PC-3 (cell line): ENCODE measurements at regions of chr15 and their contacts with region 1.

Region 1: DNA sequence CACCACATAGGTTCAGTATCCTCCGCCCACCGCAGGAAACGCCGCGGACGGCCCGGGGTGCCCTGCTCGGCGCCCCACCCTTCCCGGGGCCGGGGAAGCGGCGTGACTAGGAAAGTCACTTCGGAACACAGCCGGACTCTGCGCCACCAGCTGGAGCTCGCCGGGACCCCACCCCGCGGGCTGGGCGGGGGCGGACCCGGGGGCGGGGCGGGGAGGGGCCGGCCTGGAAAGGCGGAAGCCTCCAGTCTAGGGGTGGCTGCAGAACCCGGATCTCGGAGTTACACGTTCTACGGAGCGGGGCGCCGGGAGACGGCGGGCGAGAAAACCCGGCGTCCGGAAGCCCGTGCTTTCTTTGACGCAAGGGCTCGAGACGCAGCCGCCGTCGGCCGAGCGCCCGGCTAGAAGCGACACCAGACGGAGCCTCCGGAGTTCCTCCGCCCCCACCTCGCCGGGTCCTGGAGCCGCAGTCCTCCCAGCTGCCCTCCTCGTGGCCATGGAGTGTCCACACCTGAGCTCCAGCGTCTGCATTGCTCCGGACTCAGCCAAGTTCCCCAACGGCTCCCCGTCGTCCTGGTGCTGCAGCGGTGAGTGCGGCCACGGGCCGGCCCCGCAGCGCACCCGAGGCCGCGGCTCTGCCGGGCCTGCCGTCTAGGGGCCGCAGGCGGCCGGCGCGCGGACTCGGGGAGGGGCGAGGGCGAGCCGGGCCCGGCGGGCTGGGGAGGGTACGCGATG is at the start of gene USP3:
- DNase-seq: peak; percentile 91
- ATAC-seq: peak; percentile 53
- H3K4me3 ChIP-seq: peak within 1 kb of the TSS; percentile 85
- H3K27ac ChIP-seq: peak within 1 kb of the TSS; percentile 100
- H3K4me1 ChIP-seq: peaks cover 79% of the 10 kb centered on the region
- H3K27me3 ChIP-seq: no peaks in the 10 kb centered on the region
- CTCF ChIP-seq: no peak
- total RNA-seq, gene USP3: 26.9 and 27.3 TPM in 2 replicates

Region 2: DNA sequence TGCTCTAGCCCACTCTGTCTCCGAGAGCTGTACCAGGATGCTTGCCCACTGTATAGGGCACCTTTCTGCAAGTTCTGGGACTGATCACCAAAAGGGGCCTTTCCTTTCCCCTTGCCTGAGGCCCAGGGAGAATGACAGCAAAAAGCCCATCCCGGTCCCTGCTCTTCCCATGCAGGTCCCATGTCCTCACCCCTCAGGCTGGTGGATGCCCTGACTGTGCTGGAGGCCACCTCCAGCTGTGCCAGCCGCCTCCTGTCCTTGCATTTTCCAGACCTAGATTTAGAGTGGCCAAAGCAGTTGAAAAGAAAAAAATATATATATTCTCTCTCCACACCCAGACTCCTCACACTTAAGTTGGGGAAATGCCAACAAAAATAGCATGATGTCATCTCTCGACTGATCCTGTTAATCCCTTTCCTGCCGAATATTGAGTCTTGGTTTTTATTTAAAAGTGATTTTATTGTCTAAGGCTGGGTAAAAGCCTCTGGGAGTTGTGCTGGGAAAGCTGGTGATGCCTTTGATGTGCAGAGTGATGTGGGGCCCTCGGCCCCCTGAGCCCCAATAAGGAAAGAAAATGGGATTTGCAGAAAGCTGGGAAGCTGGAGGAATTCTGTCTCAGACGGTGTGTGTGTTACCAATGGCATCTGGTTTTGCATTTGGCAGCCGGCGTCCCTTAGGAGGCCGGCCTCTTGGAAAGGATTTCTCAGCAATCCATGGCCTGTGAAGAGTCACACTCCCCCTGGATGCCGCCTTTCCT is 491.2 kb before region 1 on chr15:
- CTCF ChIA-PET with region 1: no interaction called
- POLR2A ChIA-PET with region 1: interaction called, 13 read pairs
- intact Hi-C with region 1: no loop called
- DNase-seq: peak; percentile 42
- ATAC-seq: no peak
- H3K4me3 ChIP-seq: no peak overlapping the region
- H3K27ac ChIP-seq: no peak overlapping the region
- H3K4me1 ChIP-seq: peaks cover 12% of the 10 kb centered on the region
- H3K27me3 ChIP-seq: no peaks in the 10 kb centered on the region
- CTCF ChIP-seq: no peak

Region 3: GRCh38 chr15:63107895-63108546 is 396.4 kb before region 1 on chr15:
- CTCF ChIA-PET with region 1: no interaction called
- POLR2A ChIA-PET with region 1: no interaction called
- intact Hi-C with region 1: no loop called
- DNase-seq: peak; percentile 38
- ATAC-seq: no peak
- H3K4me3 ChIP-seq: no peak overlapping the region
- H3K27ac ChIP-seq: no peak overlapping the region
- H3K4me1 ChIP-seq: no peaks in the 10 kb centered on the region
- H3K27me3 ChIP-seq: no peaks in the 10 kb centered on the region
- CTCF ChIP-seq: no peak

Region 4: GRCh38 chr15:63188926-63189871 is 315.2 kb before region 1 on chr15 and contains the start of gene RAB8B:
- CTCF ChIA-PET with region 1: no interaction called
- POLR2A ChIA-PET with region 1: no interaction called
- intact Hi-C with region 1: no loop called
- DNase-seq: peak; percentile 91
- ATAC-seq: peak; percentile 97
- H3K4me3 ChIP-seq: peak within 1 kb of the TSS; percentile 89
- H3K27ac ChIP-seq: no peak within 1 kb of the TSS
- H3K4me1 ChIP-seq: peaks cover 36% of the 10 kb centered on the region
- H3K27me3 ChIP-seq: no peaks in the 10 kb centered on the region
- CTCF ChIP-seq: no peak
- total RNA-seq, gene RAB8B: 6.2 and 8.5 TPM in 2 replicates

Region 5: DNA sequence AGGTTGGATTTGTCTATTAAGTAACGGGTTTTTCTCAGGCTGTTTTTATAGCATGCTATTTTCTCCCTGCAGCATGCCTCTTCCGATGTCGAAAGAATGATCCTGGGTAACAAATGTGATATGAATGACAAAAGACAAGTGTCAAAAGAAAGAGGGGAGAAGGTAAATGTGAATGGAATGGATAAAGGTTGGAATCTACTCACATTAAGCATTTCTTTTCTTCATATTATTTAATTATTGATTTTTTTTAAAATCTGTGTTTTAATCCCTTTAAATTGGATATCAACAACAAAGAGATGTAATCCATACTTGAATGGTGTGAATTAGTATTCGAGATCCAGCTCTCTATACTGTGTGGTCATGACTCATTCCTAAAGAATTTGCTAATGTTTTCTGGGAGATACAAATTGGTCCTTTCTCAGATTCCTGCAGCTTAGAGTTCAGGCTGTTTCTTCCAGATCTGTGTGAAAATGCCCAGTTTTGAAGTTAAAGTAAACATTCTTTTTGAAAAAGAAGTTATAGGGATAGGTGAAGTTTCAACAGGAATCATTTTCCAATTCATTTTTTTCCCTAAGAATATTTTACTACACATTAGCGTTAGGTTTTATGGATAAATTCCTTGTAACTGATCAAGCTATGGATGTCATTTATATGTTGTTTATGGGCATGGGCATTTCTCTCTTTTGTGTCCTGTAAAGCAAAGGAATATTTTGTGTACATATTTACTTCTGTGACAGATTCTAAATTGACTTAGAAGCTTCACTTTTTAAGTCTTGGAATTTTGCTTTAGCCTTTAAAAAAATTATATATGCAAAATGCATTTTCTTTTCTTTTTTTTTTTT is 247.8 kb before region 1 on chr15:
- CTCF ChIA-PET with region 1: no interaction called
- POLR2A ChIA-PET with region 1: no interaction called
- intact Hi-C with region 1: no loop called
- DNase-seq: peak; percentile 65
- ATAC-seq: peak; percentile 81
- H3K4me3 ChIP-seq: no peak overlapping the region
- H3K27ac ChIP-seq: no peak overlapping the region
- H3K4me1 ChIP-seq: peaks cover 15% of the 10 kb centered on the region
- H3K27me3 ChIP-seq: no peaks in the 10 kb centered on the region
- CTCF ChIP-seq: no peak

Region 6: DNA sequence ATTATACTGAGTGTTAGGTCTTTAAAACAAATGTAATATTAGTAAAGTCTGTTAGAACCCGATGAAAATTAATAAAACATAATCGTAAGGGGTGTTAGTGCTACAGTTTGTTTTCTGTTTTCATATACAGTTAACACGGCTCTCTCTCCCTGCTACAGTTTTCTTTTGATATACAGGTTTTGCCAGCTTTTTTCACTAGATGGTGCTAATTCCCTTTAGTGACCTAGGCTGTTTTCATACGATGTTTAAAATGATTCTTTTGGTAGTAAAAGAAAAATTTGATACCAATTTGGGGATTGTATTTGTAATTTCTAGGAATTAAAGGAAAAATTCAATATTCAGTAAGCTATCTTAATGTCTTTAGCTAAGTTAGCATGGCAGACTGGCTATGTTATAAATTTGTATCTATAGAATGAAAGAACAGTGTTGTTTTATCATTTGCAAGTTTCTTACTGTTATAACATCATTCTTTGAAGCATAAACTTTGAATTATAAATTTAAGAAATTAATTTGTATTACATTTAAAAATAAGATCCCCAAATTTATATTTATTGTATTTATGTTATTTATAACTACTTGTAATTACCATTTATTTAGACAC is 215.5 kb before region 1 on chr15:
- CTCF ChIA-PET with region 1: no interaction called
- POLR2A ChIA-PET with region 1: no interaction called
- intact Hi-C with region 1: loop called (anchors 5 kb)
- DNase-seq: peak; percentile 69
- ATAC-seq: no peak
- H3K4me3 ChIP-seq: no peak overlapping the region
- H3K27ac ChIP-seq: no peak overlapping the region
- H3K4me1 ChIP-seq: peaks cover 5% of the 10 kb centered on the region; the same call in 1 of the 2 replicates
- H3K27me3 ChIP-seq: no peaks in the 10 kb centered on the region
- CTCF ChIP-seq: peak; percentile 82

Region 7: DNA sequence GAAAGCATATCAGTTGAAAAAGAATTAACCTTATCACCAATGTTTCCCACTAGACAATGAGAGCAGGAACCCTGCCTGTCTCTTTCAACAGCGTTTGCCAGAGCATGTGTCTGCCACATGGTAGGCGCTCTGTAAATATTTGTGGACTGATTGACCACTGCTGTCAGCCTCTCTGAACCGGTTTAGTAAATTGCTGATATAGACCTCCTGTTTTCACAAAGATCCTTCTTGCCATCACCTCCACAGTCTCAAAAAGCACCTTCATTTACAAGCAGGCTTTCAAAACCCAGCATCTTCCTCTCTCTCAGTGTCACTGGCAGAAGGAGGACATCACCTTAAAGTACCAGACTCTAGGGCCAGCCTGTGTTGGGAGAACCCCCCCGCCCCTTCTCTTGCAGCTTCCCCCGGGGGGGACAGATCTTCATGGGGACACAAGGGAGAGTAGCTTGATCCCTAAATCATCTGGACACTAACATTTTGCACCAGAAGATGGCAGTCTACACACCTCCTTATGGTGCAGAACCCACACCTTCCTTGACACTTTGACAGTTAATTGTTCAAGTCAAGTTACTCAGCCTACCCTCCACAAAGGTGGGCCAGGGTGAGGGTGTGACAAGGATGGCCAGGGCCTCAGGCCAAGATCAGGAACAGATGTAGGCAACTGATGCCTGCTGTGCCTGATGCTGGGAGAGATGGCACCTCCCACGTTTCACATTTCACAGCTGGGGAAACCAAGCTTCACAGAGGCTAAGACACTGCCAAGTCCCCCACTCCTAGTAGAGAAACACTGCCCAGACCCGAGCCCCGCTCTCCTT is 37.8 kb before region 1 on chr15:
- CTCF ChIA-PET with region 1: interaction called, 10 read pairs
- POLR2A ChIA-PET with region 1: interaction called, 13 read pairs
- intact Hi-C with region 1: loop called (anchors 2 kb)
- DNase-seq: peak; percentile 72
- ATAC-seq: peak; percentile 55
- H3K4me3 ChIP-seq: no peak overlapping the region
- H3K27ac ChIP-seq: no peak overlapping the region
- H3K4me1 ChIP-seq: peaks cover 21% of the 10 kb centered on the region
- H3K27me3 ChIP-seq: no peaks in the 10 kb centered on the region
- CTCF ChIP-seq: peak; percentile 75

Region 8: DNA sequence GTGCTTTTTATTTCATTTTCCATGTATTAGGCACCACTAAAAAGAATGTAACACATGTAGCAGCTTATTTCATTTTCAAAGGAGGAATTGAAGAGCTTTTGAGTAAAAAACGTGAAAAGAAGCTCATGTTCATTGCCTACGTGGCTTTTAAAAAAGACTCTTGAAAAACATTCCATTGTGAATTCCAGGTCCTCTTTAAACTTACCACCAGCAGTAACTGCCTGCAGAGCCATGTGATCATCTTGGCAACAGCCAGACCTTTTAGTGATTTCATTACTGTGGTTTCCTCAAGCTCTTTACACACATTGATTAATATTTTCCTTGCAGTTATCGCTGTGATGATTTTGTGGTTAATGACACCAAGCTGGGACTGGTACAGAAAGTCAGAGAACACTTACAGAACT is 49.0 kb after region 1 on chr15:
- CTCF ChIA-PET with region 1: interaction called, 3 read pairs
- POLR2A ChIA-PET with region 1: no interaction called
- intact Hi-C with region 1: loop called (anchors 2 kb)
- DNase-seq: peak; percentile 61
- ATAC-seq: peak; percentile 75
- H3K4me3 ChIP-seq: no peak overlapping the region
- H3K27ac ChIP-seq: peak overlapping the region; percentile 14; the same call in 1 of the 2 replicates
- H3K4me1 ChIP-seq: peaks cover 20% of the 10 kb centered on the region
- H3K27me3 ChIP-seq: no peaks in the 10 kb centered on the region
- CTCF ChIP-seq: no peak

Region 9: GRCh38 chr15:63600616-63601025 is 96.2 kb after region 1 on chr15:
- CTCF ChIA-PET with region 1: interaction called, 4 read pairs
- POLR2A ChIA-PET with region 1: interaction called, 5 read pairs
- intact Hi-C with region 1: loop called (anchors 1 kb)
- DNase-seq: peak; percentile 90
- ATAC-seq: peak; percentile 72
- H3K4me3 ChIP-seq: peak overlapping the region; percentile 94
- H3K27ac ChIP-seq: peak overlapping the region; percentile 5; the same call in 1 of the 2 replicates
- H3K4me1 ChIP-seq: peaks cover 7% of the 10 kb centered on the region; the same call in 1 of the 2 replicates
- H3K27me3 ChIP-seq: no peaks in the 10 kb centered on the region
- CTCF ChIP-seq: no peak

Region 10: GRCh38 chr15:63626955-63627354 is 122.5 kb after region 1 on chr15:
- CTCF ChIA-PET with region 1: no interaction called
- POLR2A ChIA-PET with region 1: no interaction called
- intact Hi-C with region 1: no loop called
- DNase-seq: no peak
- ATAC-seq: no peak
- H3K4me3 ChIP-seq: no peak overlapping the region
- H3K27ac ChIP-seq: no peak overlapping the region
- H3K4me1 ChIP-seq: no peaks in the 10 kb centered on the region
- H3K27me3 ChIP-seq: no peaks in the 10 kb centered on the region
- CTCF ChIP-seq: no peak